ENCODE measurements at regions of chr3 and their contacts with region 1.

Region 1: DNA sequence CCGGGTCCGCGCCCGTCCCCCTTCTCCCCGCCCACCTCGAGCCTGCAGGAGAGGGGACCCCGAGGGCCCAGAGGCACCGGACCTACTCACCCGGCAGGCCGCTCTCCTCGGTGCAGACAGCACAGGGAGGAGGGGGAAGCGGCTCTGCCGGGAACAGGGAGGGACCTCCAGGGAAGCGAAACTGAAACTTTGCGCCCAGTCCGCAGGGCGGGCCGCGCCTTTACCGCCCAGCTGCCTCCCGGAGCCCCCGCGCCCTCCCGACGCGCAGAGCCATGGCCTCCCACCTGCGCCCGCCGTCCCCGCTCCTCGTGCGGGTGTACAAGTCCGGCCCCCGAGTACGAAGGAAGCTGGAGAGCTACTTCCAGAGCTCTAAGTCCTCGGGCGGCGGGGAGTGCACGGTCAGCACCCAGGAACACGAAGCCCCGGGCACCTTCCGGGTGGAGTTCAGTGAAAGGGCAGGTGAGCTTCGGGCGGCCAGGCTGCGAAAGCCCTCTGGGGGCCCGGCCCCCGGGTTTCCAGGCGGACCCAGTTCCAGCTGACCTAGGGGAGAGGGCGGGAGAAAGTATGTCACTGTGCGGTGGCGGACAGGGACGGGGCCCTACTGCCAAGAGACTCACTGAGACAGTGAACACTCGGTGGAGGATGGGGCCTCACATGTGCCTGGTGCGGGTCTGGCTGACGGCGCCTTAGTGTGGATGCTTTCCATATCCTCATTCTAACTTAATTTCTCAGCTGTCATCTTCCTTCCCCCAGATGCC is at the starts of genes DTX3L and PARP9:
- DNase-seq: peak; percentile 78 to 82 (median 79)
- H3K4me3 ChIP-seq: peak within 1 kb of the TSS; percentile 98 to 99 (median 98)
- H3K4me3 Mint-ChIP-seq: peak within 1 kb of the TSS; percentile 89 to 99
- H3K27ac ChIP-seq: peak within 1 kb of the TSS; percentile 87 to 98
- H3K27ac Mint-ChIP-seq: peak within 1 kb of the TSS; percentile 90 to 97 (median 93)
- H3K4me1 ChIP-seq: peaks cover 20 to 24% of the 10 kb centered on the region in 2 donors
- H3K4me1 Mint-ChIP-seq: peaks cover 60% of the 10 kb centered on the region
- H3K27me3 ChIP-seq: no peaks in the 10 kb centered on the region
- H3K27me3 Mint-ChIP-seq: peaks cover 0 to 2% (median 1%) of the 10 kb centered on the region in 3 donors
- CTCF ChIP-seq: no peak
- polyA plus RNA-seq, gene DTX3L: 8.6 to 29.0 (median 17.7) TPM
- polyA plus RNA-seq, gene PARP9: 31.4 to 43.3 (median 34.4) TPM

Region 2: DNA sequence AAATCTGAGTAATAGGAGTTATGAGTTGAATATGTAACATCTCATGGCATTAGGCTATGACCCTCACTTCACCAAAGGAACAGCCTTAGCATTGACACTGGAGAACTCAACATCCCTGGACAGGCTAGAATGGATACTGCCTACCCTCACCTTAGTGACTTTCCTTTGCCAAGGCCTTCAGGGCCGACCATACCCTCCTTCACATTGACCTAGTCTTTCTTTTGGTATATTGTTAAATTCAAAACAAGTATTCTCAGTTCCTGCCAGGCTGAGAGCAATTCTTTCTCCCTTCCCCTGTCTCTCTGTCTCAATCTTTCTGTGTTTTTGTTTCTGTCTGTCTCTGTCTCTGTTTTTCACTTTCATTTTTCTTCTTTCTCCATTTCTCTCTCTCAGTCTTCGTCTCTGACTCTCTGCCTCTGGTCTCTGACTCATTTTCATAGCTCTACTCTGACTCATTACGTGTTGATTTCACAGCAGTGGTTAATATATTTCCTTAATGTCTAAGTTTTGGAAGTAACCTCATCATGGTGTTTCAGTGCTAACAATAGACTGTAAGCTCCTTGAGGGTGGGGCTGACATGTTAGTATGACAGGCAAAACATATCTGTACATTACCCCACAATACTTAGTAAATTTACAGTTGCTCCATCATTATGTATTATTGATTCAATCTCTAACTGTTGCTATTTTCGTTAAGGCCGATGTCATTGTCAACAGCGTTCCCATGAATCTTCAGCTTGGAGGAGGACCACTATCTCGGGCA is 45.6 kb after region 1 on chr3:
- intact Hi-C with region 1: loop called in 1 of 2 experiments (anchors 10 kb)
- DNase-seq: peak; percentile 26 to 69 (median 64)
- H3K4me3 ChIP-seq: no peak overlapping the region
- H3K4me3 Mint-ChIP-seq: no peak overlapping the region
- H3K27ac ChIP-seq: peak overlapping the region in 1 of 2 donors; percentile 33
- H3K27ac Mint-ChIP-seq: peak overlapping the region; percentile 1 to 93 (median 74)
- H3K4me1 ChIP-seq: no peaks in the 10 kb centered on the region
- H3K4me1 Mint-ChIP-seq: peaks cover 10% of the 10 kb centered on the region
- H3K27me3 ChIP-seq: no peaks in the 10 kb centered on the region
- H3K27me3 Mint-ChIP-seq: peaks cover 0 to 4% (median 1%) of the 10 kb centered on the region in 3 donors
- CTCF ChIP-seq: no peak

Region 3: DNA sequence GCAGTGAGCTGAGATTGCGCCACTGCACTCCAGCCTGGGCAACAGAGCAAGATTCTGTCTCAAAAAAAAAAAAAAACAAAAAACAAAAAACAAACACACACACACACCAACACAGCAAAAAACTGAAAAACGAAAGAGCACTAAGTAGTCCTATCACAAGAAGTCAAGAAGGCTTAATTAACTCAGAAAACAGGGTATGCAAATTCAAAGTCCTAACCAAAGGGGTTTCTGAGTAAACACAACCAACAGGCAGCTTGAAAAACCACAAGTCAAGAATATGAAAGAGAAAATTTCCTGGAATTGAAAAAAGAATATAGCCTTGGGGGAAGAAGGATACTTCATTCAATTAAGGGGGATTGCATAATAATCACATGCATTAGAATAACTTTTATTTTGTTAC is 78.6 kb after region 1 on chr3:
- intact Hi-C with region 1: no loop called
- DNase-seq: no peak
- H3K4me3 ChIP-seq: no peak overlapping the region
- H3K4me3 Mint-ChIP-seq: no peak overlapping the region
- H3K27ac ChIP-seq: no peak overlapping the region
- H3K27ac Mint-ChIP-seq: no peak overlapping the region
- H3K4me1 ChIP-seq: peaks cover 0 to 8% of the 10 kb centered on the region in 2 donors
- H3K4me1 Mint-ChIP-seq: peaks cover 3% of the 10 kb centered on the region
- H3K27me3 ChIP-seq: no peaks in the 10 kb centered on the region
- H3K27me3 Mint-ChIP-seq: peaks cover 0 to 5% (median 1%) of the 10 kb centered on the region in 3 donors
- CTCF ChIP-seq: no peak